ENCODE measurements at regions of chr2 and their contacts with region 1.

Region 1: GRCh38 chr2:105114551-105114950 is 76.7 kb downstream of the MRPS9 start:
- DNase-seq: peak; percentile 81
- H3K4me3 ChIP-seq: no peak overlapping the region
- H3K27ac ChIP-seq: no peak overlapping the region
- H3K4me1 ChIP-seq: peaks cover 0 to 10% of the 10 kb centered on the region in 2 experiments; a peak in 1 of 4 replicates
- H3K27me3 ChIP-seq: no peaks in the 10 kb centered on the region
- CTCF ChIP-seq: peak; percentile 86
- EP300 ChIP-seq: no peak
- RAD21 ChIP-seq: peak; percentile 94

Region 2: DNA sequence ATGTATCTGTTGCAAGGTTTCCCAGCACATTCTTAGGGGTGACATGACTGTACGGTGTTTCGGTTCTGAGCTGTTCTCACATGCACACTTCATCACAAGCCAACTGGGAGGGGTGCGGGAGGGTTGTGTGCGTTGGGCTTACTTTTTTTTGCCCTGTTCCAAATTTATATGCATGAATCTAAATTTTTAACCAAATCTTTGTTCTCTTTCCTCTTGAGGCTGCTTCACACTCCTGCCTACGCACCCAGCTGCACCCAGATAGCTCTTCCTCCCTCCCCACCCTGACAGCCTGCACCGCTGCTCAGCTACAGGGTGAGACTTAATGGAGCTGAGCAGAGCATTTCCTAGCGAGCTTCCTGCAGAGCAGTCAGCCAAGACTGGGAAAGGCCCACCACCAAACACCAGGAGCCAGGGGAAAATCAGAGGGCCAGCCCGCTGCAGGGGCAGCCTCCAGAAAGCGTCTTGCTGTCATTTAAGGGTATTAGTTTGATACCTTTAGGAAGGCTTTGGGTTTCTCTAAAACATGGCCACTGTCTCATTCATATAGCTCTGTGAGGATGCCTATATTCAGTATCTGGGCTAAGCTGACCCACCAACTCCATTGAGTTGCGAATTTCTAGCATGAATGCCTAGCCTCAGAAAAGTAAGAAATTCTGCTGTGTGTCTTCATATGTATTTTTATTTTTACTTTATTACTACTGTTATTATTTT is 176.2 kb before region 1 on chr2:
- CTCF ChIA-PET with region 1: no interaction called
- POLR2A ChIA-PET with region 1: no interaction called
- DNase-seq: no peak
- H3K4me3 ChIP-seq: no peak overlapping the region
- H3K27ac ChIP-seq: no peak overlapping the region
- H3K4me1 ChIP-seq: no peaks in the 10 kb centered on the region; a peak in 1 of 4 replicates
- H3K27me3 ChIP-seq: no peaks in the 10 kb centered on the region; the same call in 1 of the 2 replicates
- CTCF ChIP-seq: no peak
- EP300 ChIP-seq: no peak
- RAD21 ChIP-seq: no peak

Region 3: DNA sequence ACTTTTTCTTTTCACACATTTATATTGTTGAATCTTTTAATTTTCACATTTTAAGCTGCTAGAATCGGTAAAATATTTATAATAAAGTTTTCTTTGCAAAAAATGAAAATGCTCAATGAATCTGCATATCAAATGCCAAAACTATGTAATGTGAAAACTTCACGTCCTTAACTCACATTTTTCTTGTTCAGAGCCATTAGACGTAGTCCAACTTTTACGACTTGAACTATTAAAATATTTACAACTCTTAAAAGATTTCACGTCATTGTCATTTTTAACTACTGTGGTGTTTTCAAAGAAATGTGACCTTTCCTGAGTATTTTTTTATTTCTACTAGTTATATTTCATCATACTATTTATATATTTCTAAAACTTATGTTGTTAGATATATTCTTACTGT is 21.8 kb before region 1 on chr2:
- CTCF ChIA-PET with region 1: interaction called, 14 read pairs
- POLR2A ChIA-PET with region 1: no interaction called
- DNase-seq: no peak
- H3K4me3 ChIP-seq: no peak overlapping the region
- H3K27ac ChIP-seq: no peak overlapping the region
- H3K4me1 ChIP-seq: no peaks in the 10 kb centered on the region
- H3K27me3 ChIP-seq: no peaks in the 10 kb centered on the region
- CTCF ChIP-seq: no peak
- EP300 ChIP-seq: no peak
- RAD21 ChIP-seq: no peak

Region 4: GRCh38 chr2:105125428-105125827 is 10.9 kb after region 1 on chr2:
- CTCF ChIA-PET with region 1: interaction called, 21 read pairs
- POLR2A ChIA-PET with region 1: no interaction called
- DNase-seq: peak; percentile 41
- H3K4me3 ChIP-seq: no peak overlapping the region
- H3K27ac ChIP-seq: no peak overlapping the region
- H3K4me1 ChIP-seq: no peaks in the 10 kb centered on the region
- H3K27me3 ChIP-seq: no peaks in the 10 kb centered on the region; the same call in 1 of the 2 replicates
- CTCF ChIP-seq: peak; percentile 16; the same call in 1 of the 2 replicates
- EP300 ChIP-seq: no peak
- RAD21 ChIP-seq: no peak; the same call in 1 of the 2 replicates

Region 5: GRCh38 chr2:105179469-105180372 is 65.2 kb after region 1 on chr2:
- CTCF ChIA-PET with region 1: interaction called, 27 read pairs
- POLR2A ChIA-PET with region 1: no interaction called
- DNase-seq: peak; percentile 28
- H3K4me3 ChIP-seq: no peak overlapping the region
- H3K27ac ChIP-seq: no peak overlapping the region
- H3K4me1 ChIP-seq: peaks cover 0 to 3% of the 10 kb centered on the region in 2 experiments; a peak in 1 of 4 replicates
- H3K27me3 ChIP-seq: no peaks in the 10 kb centered on the region
- CTCF ChIP-seq: peak; percentile 55
- EP300 ChIP-seq: no peak
- RAD21 ChIP-seq: peak; percentile 56

Region 6: DNA sequence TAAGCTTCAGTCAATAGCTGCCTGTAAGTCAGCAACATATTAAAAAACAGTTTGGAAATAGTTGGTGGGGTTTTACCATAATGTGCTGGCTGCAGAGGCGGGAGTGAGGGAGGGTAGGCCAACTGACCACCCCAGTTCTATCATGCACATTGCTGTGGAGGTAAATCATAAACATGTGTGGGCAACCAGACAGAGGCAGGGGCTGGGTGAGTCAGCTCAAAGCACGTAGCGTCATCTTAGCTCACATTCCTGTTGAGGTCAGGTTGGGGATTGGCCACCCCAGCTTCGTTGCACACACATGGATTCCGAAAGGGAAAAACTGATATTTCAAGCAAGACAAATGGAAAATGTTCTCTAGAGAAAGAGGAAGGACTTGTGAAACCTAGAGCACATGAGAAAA is 146.5 kb after region 1 on chr2:
- CTCF ChIA-PET with region 1: interaction called, 10 read pairs
- POLR2A ChIA-PET with region 1: no interaction called
- DNase-seq: peak; percentile 41
- H3K4me3 ChIP-seq: no peak overlapping the region
- H3K27ac ChIP-seq: peak overlapping the region; percentile 47 to 70; a peak in 3 of 4 replicates
- H3K4me1 ChIP-seq: peaks cover 3 to 7% of the 10 kb centered on the region in 2 experiments; a peak in 2 of 4 replicates
- H3K27me3 ChIP-seq: no peaks in the 10 kb centered on the region
- CTCF ChIP-seq: no peak
- EP300 ChIP-seq: peak in 1 of 2 experiments; percentile 48; a peak in 1 of 4 replicates
- RAD21 ChIP-seq: no peak

Region 7: DNA sequence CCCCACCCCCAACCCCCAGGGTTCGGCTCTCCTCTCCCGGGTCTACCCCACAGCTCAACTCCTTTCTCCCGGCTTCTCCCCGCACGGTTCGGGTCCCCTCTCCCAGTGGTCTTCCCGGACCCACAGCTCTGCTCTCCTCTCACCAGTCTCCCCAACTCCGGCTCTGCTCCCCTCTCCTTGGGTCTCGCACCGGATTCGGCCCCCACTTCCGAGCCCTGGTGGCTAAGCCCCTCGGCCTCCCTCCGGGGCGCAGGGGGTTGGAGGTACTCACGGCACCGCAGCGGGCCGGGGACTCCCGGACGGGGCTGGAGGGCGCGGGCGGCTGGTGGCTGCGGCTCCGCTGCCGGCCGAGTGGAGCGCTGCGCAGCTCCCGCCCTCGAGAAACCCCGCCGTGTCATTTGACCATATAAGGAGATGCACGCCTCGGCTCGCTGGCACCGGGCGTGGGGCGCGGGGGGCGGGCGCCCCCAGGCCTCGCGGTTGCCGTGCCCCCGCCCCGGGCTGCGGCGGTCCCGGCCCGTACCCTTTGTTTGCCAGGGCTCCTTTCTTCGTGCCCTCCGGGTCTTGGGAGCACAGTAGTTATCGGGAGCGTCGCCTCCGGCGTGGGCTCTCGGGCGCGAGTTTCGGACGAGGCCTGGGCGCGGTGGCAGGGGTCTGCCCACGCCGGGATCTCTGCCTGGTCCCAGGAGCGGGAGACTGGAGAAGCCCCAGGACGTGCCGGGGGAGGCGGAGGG is 284.3 kb after region 1 on chr2 and contains the start of gene FHL2:
- CTCF ChIA-PET with region 1: no interaction called
- POLR2A ChIA-PET with region 1: no interaction called
- DNase-seq: peak; percentile 94
- H3K4me3 ChIP-seq: peak within 1 kb of the TSS; percentile 89 to 95
- H3K27ac ChIP-seq: peak within 1 kb of the TSS in 1 of 2 experiments; percentile 87; a peak in 3 of 4 replicates
- H3K4me1 ChIP-seq: peaks cover 4 to 6% of the 10 kb centered on the region in 2 experiments
- H3K27me3 ChIP-seq: no peaks in the 10 kb centered on the region
- CTCF ChIP-seq: peak; percentile 48
- EP300 ChIP-seq: no peak
- RAD21 ChIP-seq: peak; percentile 20; the same call in 1 of the 2 replicates
- polyA plus RNA-seq, gene FHL2: 31.7 and 33.1 TPM in 2 replicates